ENCODE measurements at regions of chr6 and their contacts with region 1.

Region 1: DNA sequence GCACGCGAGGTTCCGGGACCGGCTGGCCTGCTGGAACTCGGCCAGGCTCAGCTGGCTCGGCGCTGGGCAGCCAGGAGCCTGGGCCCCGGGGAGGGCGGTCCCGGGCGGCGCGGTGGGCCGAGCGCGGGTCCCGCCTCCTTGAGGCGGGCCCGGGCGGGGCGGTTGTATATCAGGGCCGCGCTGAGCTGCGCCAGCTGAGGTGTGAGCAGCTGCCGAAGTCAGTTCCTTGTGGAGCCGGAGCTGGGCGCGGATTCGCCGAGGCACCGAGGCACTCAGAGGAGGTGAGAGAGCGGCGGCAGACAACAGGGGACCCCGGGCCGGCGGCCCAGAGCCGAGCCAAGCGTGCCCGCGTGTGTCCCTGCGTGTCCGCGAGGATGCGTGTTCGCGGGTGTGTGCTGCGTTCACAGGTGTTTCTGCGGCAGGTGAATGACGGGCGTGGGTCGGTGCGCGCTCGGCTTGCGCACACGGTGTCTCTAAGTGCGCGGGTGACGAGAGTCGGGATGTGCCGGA is at the start of gene CDKN1A:
- DNase-seq: no peak
- ATAC-seq: peak; percentile 88
- H3K4me3 ChIP-seq: peak within 1 kb of the TSS; percentile 77 to 89
- H3K27ac ChIP-seq: peak within 1 kb of the TSS; percentile 75
- H3K4me1 ChIP-seq: peaks cover 38% of the 10 kb centered on the region
- H3K27me3 ChIP-seq: no peaks in the 10 kb centered on the region
- CTCF ChIP-seq: no peak
- total RNA-seq, gene CDKN1A: 46.2 TPM

Region 2: GRCh38 chr6:36759148-36759759 is 80.7 kb after region 1 on chr6:
- CTCF ChIA-PET with region 1: interaction called, 3 read pairs
- POLR2A ChIA-PET with region 1: interaction called, 6 read pairs
- in situ Hi-C with region 1: no loop called
- intact Hi-C with region 1: loop called (anchors 10 kb)
- DNase-seq: no peak
- ATAC-seq: peak; percentile 90
- H3K4me3 ChIP-seq: no peak overlapping the region
- H3K27ac ChIP-seq: no peak overlapping the region
- H3K4me1 ChIP-seq: peaks cover 3% of the 10 kb centered on the region
- H3K27me3 ChIP-seq: no peaks in the 10 kb centered on the region
- CTCF ChIP-seq: peak; percentile 99

Measured in Panc1 (cell line).